Testis (tissue), 5 donors: ENCODE measurements at regions of chr5 and their contacts with region 1.

Region 1: DNA sequence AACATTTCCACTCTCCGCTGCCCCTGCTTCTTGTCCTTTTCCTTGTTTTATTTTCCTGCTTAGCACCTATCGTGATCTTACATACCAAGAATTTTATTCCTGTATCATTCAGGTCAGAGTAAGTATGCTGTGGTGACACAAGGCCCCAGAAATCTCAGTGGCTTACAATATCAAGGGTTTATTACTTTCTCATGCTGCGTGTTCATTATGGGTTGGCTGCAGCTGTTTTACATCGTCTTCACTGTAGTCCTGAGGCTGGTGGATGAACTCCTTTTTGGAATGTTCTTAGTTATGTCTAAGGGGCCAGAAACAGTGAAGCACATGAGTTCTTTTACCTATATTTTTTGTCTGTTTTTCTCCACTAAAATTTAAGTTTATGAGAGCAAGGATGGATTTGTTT is 51.2 kb downstream of the FCHO2 start:
- DNase-seq: no peak
- H3K4me3 ChIP-seq: no peak overlapping the region
- H3K27ac ChIP-seq: no peak overlapping the region
- H3K4me1 ChIP-seq: no peaks in the 10 kb centered on the region
- H3K27me3 ChIP-seq: no peaks in the 10 kb centered on the region
- CTCF ChIP-seq: no peak
- POLR2A ChIP-seq: no peak

Region 2: GRCh38 chr5:72141440-72142355 is 865.4 kb before region 1 on chr5:
- intact Hi-C with region 1: no loop called
- DNase-seq: peak; percentile 68
- H3K4me3 ChIP-seq: no peak overlapping the region
- H3K27ac ChIP-seq: peak overlapping the region; percentile 56 to 73
- H3K4me1 ChIP-seq: peaks cover 71% of the 10 kb centered on the region
- H3K27me3 ChIP-seq: no peaks in the 10 kb centered on the region
- CTCF ChIP-seq: no peak
- POLR2A ChIP-seq: no peak

Region 3: GRCh38 chr5:72878854-72879253 is 128.2 kb before region 1 on chr5:
- intact Hi-C with region 1: loop called (anchors 5 kb)
- DNase-seq: no peak
- H3K4me3 ChIP-seq: no peak overlapping the region
- H3K27ac ChIP-seq: no peak overlapping the region
- H3K4me1 ChIP-seq: no peaks in the 10 kb centered on the region
- H3K27me3 ChIP-seq: no peaks in the 10 kb centered on the region
- CTCF ChIP-seq: no peak
- POLR2A ChIP-seq: no peak

Region 4: GRCh38 chr5:72955768-72956323 is 51.2 kb before region 1 on chr5 and contains the start of gene FCHO2:
- intact Hi-C with region 1: no loop called
- DNase-seq: peak; percentile 99
- H3K4me3 ChIP-seq: peak within 1 kb of the TSS; percentile 82 to 83
- H3K27ac ChIP-seq: peak within 1 kb of the TSS; percentile 96 to 100
- H3K4me1 ChIP-seq: peaks cover 13% of the 10 kb centered on the region
- H3K27me3 ChIP-seq: no peaks in the 10 kb centered on the region
- CTCF ChIP-seq: peak; percentile 85 to 95 (median 95)
- POLR2A ChIP-seq: peak; percentile 14
- total RNA-seq, gene FCHO2: 18.7 to 20.6 TPM